Pancreas (tissue), 10 donors: ENCODE measurements at regions of chr6 and their contacts with region 1.

Region 1: GRCh38 chr6:33771146-33772081 is 17.5 kb downstream of the LEMD2 start:
- DNase-seq: peak; percentile 32 to 89 (median 71)
- ATAC-seq: peak; percentile 67 to 88 (median 84)
- H3K4me3 ChIP-seq: no peak overlapping the region
- H3K27ac ChIP-seq: peak overlapping the region in 3 of 4 donors; percentile 28 to 54 (median 37)
- H3K4me1 ChIP-seq: peaks cover 0 to 4% (median 0%) of the 10 kb centered on the region in 3 donors
- H3K27me3 ChIP-seq: no peaks in the 10 kb centered on the region
- CTCF ChIP-seq: peak; percentile 92 to 95 (median 94)

Region 2: DNA sequence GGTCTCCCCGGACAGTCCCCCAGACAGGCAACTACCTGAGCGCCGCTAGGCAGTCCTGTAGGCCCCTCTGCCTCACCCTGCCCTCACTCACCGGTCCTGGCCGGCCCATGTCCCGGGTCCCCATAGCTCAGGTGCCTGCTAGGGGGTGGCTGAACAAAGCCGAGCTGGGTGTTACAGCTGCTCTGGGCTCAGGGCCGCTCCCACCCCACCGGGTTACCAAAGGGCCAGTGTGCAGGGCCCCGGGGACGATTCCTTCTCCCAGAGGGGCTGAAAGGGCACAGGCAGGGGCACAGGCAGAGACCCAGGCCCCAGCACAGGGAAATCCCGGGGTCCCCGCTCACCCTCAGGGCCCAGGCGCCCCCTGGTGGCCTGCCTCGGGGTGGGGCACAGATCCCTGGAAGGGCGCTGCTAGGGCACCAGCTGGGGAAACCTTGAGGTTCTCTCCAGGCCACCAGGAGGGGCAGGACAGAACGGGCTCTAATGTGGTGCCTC is 256.1 kb after region 1 on chr6:
- intact Hi-C with region 1: loop called in 1 of 3 experiments (anchors 5 kb)
- DNase-seq: peak in 3 of 6 donors; percentile 44 to 85 (median 63)
- ATAC-seq: peak; percentile 43 to 80 (median 66)
- H3K4me3 ChIP-seq: no peak overlapping the region
- H3K27ac ChIP-seq: no peak overlapping the region
- H3K4me1 ChIP-seq: no peaks in the 10 kb centered on the region
- H3K27me3 ChIP-seq: no peaks in the 10 kb centered on the region
- CTCF ChIP-seq: peak; percentile 34 to 65 (median 60)

Region 3: GRCh38 chr6:34154668-34155447 is 383.4 kb after region 1 on chr6:
- intact Hi-C with region 1: loop called in 2 of 3 experiments (anchors 5 kb)
- DNase-seq: peak in 4 of 6 donors; percentile 19 to 89 (median 56)
- ATAC-seq: peak; percentile 80 to 96 (median 92)
- H3K4me3 ChIP-seq: peak overlapping the region in 1 of 4 donors; percentile 28
- H3K27ac ChIP-seq: no peak overlapping the region
- H3K4me1 ChIP-seq: peaks cover 0 to 5% (median 0%) of the 10 kb centered on the region in 3 donors
- H3K27me3 ChIP-seq: peaks cover 0 to 3% (median under 1%) of the 10 kb centered on the region in 4 donors
- CTCF ChIP-seq: peak; percentile 89 to 97 (median 93)